ENCODE measurements at regions of chr19 and their contacts with region 1.

Region 1: DNA sequence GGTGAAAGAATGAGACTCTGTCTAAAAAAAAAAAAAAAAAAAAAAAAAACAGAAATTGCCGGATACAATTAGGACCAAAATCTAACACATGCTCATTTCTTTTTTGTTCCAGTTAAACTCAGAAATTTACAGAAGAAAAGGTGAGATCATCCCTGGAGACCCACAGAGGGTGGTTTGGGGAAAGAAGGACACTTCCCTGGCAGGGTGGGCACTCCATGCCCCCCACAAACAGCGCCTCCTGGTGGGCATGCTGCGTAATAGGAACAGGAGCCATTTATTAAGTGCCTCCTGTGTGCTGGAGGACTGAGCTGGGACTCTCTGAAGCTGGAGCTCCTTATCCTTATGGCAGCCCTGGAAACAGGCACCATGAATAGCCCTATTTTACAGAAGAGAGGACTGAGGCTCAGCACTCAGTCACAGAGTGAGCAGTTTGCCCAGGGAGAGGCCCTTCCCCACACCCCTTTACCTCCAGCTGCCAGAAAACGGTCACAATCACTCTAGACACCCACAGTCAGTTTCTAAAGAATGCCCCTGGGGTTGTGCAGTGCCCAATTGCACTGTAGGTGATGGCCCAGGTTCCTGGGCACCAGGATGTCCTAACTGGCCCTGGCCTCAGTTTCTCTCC is 10.1 kb downstream of the C19orf38 start:
- DNase-seq: peak; percentile 38
- H3K4me3 ChIP-seq: no peak overlapping the region
- H3K27ac ChIP-seq: no peak overlapping the region
- H3K4me1 ChIP-seq: no peaks in the 10 kb centered on the region
- H3K27me3 ChIP-seq: no peaks in the 10 kb centered on the region
- CTCF ChIP-seq: peak; percentile 90 to 91
- POLR2A ChIP-seq: no peak

Region 2: DNA sequence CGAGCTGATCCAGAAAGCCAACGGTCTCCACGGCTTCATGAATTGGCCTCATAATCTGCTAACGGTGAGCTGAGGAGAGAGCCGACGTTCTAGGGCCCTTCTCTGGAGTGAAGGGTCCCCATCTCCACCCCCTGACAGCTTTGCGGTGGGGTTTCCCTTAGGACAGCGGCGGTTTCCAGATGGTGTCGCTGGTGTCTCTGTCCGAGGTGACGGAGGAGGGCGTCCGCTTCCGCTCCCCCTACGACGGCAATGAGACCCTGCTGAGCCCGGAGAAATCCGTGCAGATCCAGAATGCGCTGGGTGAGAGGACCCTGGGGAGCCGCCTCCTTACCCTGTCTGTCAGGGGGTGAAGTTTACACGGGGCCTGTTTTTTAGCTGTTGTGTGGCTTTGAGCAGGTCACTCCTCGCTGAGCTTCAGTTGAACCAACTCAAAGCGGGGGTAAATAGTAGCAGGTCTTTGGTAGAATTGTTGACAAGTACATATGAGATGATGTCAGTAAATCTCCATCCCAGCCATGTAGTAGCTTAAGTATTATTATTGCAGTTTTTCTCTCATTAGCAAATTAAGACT is 156.3 kb before region 1 on chr19:
- CTCF ChIA-PET with region 1: interaction called, 13 read pairs
- POLR2A ChIA-PET with region 1: no interaction called
- dilution Hi-C with region 1: no loop called
- intact Hi-C with region 1: no loop called
- DNase-seq: peak; percentile 13
- H3K4me3 ChIP-seq: peak overlapping the region; percentile 36 to 99 (median 68)
- H3K27ac ChIP-seq: peak overlapping the region; percentile 0
- H3K4me1 ChIP-seq: peaks cover 10% of the 10 kb centered on the region
- H3K27me3 ChIP-seq: no peaks in the 10 kb centered on the region
- CTCF ChIP-seq: no peak
- POLR2A ChIP-seq: no peak

Region 3: GRCh38 chr19:10780368-10780767 is 77.9 kb before region 1 on chr19:
- CTCF ChIA-PET with region 1: interaction called, 12 read pairs
- POLR2A ChIA-PET with region 1: no interaction called
- dilution Hi-C with region 1: no loop called
- intact Hi-C with region 1: no loop called
- DNase-seq: peak; percentile 90
- H3K4me3 ChIP-seq: no peak overlapping the region
- H3K27ac ChIP-seq: peak overlapping the region; percentile 96
- H3K4me1 ChIP-seq: peaks cover 19% of the 10 kb centered on the region
- H3K27me3 ChIP-seq: no peaks in the 10 kb centered on the region
- CTCF ChIP-seq: no peak
- POLR2A ChIP-seq: no peak

Region 4: DNA sequence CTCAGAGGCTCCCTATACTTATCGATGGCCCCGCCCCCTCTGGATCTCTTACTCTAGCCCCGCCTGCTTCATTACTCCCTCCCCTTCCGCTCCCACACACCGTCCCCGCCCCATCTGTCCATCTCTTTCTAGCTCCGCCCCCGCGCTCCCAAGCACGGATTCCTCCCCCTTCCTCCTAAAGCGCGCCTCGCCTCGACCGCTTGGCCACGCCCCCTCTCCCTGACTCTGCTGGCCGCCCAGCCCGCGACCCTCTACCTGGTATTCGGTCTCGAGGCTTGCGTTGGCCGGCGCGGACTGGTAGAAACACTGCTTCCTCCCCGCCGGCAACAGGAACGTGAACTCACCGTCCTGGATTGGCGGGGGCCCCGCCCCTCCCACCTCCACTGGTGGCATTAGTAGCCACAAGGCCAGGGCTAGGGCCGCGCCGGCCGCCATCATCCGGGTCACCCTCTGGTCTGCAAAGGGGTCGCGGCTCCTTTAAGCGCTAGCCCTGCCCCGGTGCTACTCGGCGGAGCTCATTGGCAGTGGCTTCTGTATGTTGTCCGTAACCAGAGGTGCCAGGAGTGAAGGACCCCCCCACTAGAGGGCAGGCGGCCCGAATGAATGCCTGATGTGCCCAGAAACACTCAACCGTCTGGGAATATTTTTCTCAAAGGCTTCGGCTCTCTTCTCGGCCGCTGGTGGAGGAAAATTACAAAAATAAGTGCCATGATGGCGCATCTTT is 22.4 kb before region 1 on chr19 and contains the start of gene TMED1:
- CTCF ChIA-PET with region 1: interaction called, 39 read pairs
- POLR2A ChIA-PET with region 1: no interaction called
- dilution Hi-C with region 1: no loop called
- intact Hi-C with region 1: no loop called
- DNase-seq: peak; percentile 99
- H3K4me3 ChIP-seq: peak within 1 kb of the TSS; percentile 17 to 71 (median 48)
- H3K27ac ChIP-seq: peak within 1 kb of the TSS; percentile 97
- H3K4me1 ChIP-seq: peaks cover 9% of the 10 kb centered on the region
- H3K27me3 ChIP-seq: no peaks in the 10 kb centered on the region
- CTCF ChIP-seq: peak in 1 of 2 donors; percentile 8
- POLR2A ChIP-seq: no peak
- total RNA-seq, gene TMED1: 31.2 and 33.9 TPM in 2 replicates

Region 5: DNA sequence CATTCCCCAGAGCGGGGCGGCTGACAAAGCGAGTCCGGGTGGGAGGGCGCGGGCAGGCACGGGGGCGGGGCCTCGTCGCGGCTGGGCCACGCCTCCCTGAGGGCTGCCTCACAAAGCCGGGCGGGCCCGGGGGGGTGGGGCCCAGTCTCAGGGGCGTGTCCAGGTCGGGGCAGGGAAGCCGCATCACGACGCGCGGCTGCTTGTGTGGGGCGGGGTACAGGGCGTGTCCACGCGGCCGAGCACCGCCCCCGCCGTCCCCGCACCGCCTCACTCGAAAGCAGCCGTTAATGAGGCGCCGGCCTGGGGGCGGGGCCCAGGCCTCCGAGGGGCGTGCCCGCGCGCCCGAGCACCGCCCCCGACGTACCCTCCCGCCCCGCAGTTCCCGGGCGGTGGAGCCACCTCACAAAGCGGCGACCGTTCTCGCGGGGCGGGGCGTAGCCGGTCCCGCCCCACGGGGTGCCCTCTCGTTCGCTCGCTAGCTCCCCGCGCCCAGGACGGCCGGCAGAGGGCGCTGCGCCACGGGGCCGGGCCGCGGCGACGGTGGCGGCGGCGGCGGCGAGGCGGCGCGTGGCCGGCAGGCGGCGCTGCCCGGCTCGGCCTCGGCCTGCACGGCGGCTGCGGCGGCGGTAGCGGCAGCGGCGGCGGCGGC is 12.8 kb after region 1 on chr19 and contains the start of gene CARM1:
- CTCF ChIA-PET with region 1: interaction called, 56 read pairs
- POLR2A ChIA-PET with region 1: no interaction called
- dilution Hi-C with region 1: no loop called
- intact Hi-C with region 1: no loop called
- DNase-seq: peak; percentile 99
- H3K4me3 ChIP-seq: peak within 1 kb of the TSS; percentile 81 to 100 (median 99)
- H3K27ac ChIP-seq: peak within 1 kb of the TSS; percentile 52
- H3K4me1 ChIP-seq: peaks cover 12% of the 10 kb centered on the region
- H3K27me3 ChIP-seq: no peaks in the 10 kb centered on the region
- CTCF ChIP-seq: peak; percentile 65 to 66
- POLR2A ChIP-seq: no peak
- total RNA-seq, gene CARM1: 70.8 and 72.2 TPM in 2 replicates